MCF 10A (cell line): ENCODE measurements at regions of chr6 and their contacts with region 1.

Region 1: DNA sequence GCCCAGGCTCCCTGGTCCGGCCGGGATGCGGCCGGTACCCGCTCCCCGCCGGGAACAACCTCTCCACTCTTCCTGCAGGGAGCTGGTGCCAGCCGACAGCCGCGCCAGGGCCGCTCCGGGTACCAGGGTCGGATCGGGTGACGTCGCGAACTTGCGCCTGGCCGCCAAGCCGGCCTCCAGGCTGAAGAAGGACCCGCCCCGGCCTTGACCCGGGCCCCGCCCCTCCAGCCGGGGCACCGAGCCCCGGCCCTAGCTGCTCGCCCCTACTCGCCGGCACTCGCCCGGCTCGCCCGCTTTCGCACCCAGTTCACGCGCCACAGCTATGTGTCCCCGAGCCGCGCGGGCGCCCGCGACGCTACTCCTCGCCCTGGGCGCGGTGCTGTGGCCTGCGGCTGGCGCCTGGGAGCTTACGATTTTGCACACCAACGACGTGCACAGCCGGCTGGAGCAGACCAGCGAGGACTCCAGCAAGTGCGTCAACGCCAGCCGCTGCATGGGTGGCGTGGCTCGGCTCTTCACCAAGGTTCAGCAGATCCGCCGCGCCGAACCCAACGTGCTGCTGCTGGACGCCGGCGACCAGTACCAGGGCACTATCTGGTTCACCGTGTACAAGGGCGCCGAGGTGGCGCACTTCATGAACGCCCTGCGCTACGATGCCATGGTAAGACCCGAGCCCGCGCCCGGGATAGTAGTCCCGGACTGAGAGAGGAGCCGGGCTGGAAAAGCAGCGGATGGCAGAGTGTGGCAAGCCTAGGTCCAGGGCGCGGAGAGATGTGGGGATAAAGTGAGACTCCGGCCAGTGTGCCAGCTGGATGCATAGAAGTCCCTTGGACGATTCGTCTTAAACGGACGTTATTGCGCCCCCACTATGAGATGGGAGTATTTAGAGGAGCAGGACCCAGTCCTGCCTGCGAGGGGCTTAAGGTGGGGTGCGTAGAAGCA is at the start of gene NT5E:
- DNase-seq: peak; percentile 69
- H3K4me3 Mint-ChIP-seq: peak within 1 kb of the TSS; percentile 88
- H3K27ac Mint-ChIP-seq: peak within 1 kb of the TSS; percentile 92
- H3K4me1 Mint-ChIP-seq: peaks cover 47% of the 10 kb centered on the region
- H3K27me3 Mint-ChIP-seq: no peaks in the 10 kb centered on the region
- CTCF ChIP-seq: no peak
- total RNA-seq, gene NT5E: 112 and 121 TPM in 2 replicates

Region 2: GRCh38 chr6:84625506-84625905 is 824.6 kb before region 1 on chr6:
- CTCF ChIA-PET with region 1: no interaction called
- POLR2A ChIA-PET with region 1: no interaction called
- intact Hi-C with region 1: no loop called
- DNase-seq: no peak
- H3K4me3 Mint-ChIP-seq: no peak overlapping the region
- H3K27ac Mint-ChIP-seq: peak overlapping the region; percentile 10
- H3K4me1 Mint-ChIP-seq: peaks cover 23% of the 10 kb centered on the region
- H3K27me3 Mint-ChIP-seq: no peaks in the 10 kb centered on the region
- CTCF ChIP-seq: no peak

Region 3: DNA sequence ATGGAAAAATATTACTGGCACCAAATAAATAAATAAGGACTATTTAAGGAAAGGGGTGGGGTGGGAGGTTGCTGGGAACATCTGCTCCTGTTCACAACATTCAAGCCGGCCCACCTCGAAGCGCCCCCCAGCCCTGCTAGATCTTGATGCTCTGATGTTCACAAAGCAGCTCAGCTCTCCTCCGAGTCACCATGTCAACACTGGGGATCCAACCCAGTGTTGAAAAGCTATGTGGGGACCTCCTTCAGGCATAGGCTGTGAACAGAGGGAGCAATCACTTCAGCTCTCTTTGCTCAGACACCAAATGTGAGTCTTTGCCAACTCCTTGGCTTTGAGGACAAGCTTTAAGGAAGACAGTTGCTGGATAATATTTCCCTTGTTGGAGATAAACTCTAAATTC is 177.0 kb before region 1 on chr6:
- CTCF ChIA-PET with region 1: no interaction called
- POLR2A ChIA-PET with region 1: no interaction called
- intact Hi-C with region 1: no loop called
- DNase-seq: no peak
- H3K4me3 Mint-ChIP-seq: no peak overlapping the region
- H3K27ac Mint-ChIP-seq: no peak overlapping the region
- H3K4me1 Mint-ChIP-seq: no peaks in the 10 kb centered on the region
- H3K27me3 Mint-ChIP-seq: no peaks in the 10 kb centered on the region
- CTCF ChIP-seq: no peak

Region 4: GRCh38 chr6:85404502-85405174 is 45.5 kb before region 1 on chr6:
- CTCF ChIA-PET with region 1: interaction called, 7 read pairs
- POLR2A ChIA-PET with region 1: interaction called, 79 read pairs
- intact Hi-C with region 1: loop called (anchors 1 kb)
- DNase-seq: peak; percentile 92
- H3K4me3 Mint-ChIP-seq: peak overlapping the region; percentile 48
- H3K27ac Mint-ChIP-seq: peak overlapping the region; percentile 93
- H3K4me1 Mint-ChIP-seq: peaks cover 49% of the 10 kb centered on the region
- H3K27me3 Mint-ChIP-seq: no peaks in the 10 kb centered on the region
- CTCF ChIP-seq: no peak

Region 5: DNA sequence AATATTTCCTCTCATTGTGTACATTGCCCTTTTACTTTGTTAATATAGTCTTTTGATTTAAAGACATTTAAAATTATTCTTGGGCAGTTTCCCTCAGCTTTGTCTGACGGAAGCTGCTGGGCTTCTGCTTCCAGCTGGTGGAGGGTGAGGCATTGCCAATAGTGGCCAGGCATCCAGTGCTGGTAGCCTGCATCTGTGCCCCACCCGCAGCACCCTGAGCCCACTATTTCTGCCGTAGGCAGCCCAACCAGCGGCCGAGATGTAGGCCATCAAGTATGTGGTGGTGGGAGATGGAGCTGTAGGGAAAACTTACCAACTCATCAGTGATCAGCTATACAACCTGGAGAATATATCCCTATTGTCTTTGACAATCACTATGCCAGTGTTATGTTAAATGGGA is 418.6 kb after region 1 on chr6:
- CTCF ChIA-PET with region 1: no interaction called
- POLR2A ChIA-PET with region 1: no interaction called
- intact Hi-C with region 1: no loop called
- DNase-seq: no peak
- H3K4me3 Mint-ChIP-seq: no peak overlapping the region
- H3K27ac Mint-ChIP-seq: no peak overlapping the region
- H3K4me1 Mint-ChIP-seq: no peaks in the 10 kb centered on the region
- H3K27me3 Mint-ChIP-seq: peaks cover 12% of the 10 kb centered on the region
- CTCF ChIP-seq: no peak